Panc1 (cell line): ENCODE measurements at regions of chr1 and their contacts with region 1.

Region 1: DNA sequence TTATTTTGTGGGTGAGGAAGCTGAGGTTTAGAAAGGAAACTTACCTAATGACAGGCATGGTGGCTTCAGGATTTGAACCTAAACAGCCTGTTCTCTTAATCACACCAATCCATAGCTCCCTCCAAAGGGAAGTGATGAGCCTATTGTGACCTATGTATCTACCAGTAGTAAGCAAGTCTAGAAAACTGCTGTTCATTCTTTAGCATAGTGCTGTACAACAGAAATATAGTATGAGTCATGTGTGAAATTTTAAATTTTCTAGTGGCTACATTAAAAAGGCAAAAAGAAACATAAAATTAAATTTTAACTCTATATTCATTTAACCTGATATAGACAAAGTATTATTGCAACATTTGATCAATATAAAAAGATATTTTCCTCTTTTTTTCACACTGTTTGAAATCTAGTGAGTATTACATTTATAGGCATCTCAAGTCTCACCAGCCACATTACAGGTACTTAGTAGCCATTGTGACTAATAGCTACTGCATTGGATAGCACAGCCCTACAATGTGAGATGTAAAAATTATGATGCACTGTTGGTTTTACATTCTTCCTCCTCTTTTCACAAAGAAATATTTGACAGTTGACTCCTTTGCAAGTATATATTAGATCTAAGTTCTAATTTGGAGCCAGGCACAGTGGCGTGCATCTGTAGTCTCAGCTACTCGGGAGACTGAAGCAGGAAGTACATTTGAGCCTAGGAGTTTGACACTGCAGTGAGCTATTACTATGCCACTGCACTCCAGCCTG is 16.6 kb downstream of the IPO9 start:
- DNase-seq: no peak
- ATAC-seq: peak; percentile 68; the same call in 1 of the 2 replicates
- H3K4me3 ChIP-seq: no peak overlapping the region
- H3K27ac ChIP-seq: no peak overlapping the region
- H3K4me1 ChIP-seq: no peaks in the 10 kb centered on the region
- H3K27me3 ChIP-seq: no peaks in the 10 kb centered on the region
- CTCF ChIP-seq: no peak

Region 2: GRCh38 chr1:201739492-201740085 is 105.9 kb before region 1 on chr1:
- CTCF ChIA-PET with region 1: no interaction called
- POLR2A ChIA-PET with region 1: no interaction called
- in situ Hi-C with region 1: no loop called
- intact Hi-C with region 1: no loop called
- DNase-seq: no peak
- ATAC-seq: peak; percentile 87
- H3K4me3 ChIP-seq: peak overlapping the region; percentile 57 to 83
- H3K27ac ChIP-seq: peak overlapping the region; percentile 65
- H3K4me1 ChIP-seq: 0 out of 2 replicates have a peak, but pooled peaks cover 20% of the 10 kb centered on the region
- H3K27me3 ChIP-seq: no peaks in the 10 kb centered on the region
- CTCF ChIP-seq: no peak

Region 3: DNA sequence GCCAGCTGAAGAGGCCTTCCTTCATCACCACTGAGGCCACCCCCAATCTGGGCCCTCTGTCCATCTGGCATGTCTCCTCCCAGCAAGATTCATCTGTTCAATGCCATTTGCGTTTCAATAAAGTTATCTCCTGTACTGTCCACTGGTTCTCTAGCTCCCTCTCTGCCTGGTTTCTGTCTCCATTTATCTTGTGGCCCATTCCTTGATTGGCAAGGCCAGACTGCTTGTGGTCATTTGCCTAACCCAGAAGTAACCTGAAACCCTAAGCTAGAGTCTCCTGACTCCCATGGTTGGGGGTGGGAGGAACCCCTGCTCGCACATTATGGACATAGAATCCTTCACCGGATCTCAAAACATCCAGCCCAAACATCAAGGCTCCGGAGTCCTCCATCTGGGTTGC is 18.7 kb before region 1 on chr1:
- CTCF ChIA-PET with region 1: no interaction called
- POLR2A ChIA-PET with region 1: interaction called, 10 read pairs
- in situ Hi-C with region 1: no loop called
- intact Hi-C with region 1: no loop called
- DNase-seq: no peak
- ATAC-seq: no peak
- H3K4me3 ChIP-seq: no peak overlapping the region
- H3K27ac ChIP-seq: no peak overlapping the region
- H3K4me1 ChIP-seq: peaks cover 21% of the 10 kb centered on the region
- H3K27me3 ChIP-seq: no peaks in the 10 kb centered on the region
- CTCF ChIP-seq: no peak